Dorsolateral prefrontal cortex (tissue), 120 donors: ENCODE measurements at regions of chr1 and their contacts with region 1.

Region 1: DNA sequence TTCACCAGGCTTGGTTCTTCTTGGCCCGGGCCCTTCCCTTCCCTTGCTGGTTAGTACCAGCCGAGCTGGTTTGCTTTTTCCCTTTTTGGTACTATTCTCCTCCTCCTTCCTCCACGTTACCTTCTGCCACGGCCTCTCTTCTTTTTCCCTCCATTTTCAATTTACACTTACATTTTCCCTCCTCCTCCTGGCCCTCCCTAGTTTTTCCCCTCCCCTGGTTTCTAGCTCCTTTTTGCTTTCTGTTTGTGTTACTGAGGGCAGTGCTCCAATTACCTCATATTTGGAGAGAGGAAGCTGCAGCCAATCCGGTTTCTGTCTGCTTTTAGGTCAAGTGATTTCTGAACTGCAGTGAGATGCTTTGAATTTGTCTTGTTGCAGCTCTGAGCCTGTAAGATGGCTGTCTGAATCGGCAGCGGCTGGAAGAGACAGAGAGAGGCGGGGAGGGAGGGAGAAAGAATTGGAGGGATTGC is 63.7 kb downstream of the MACF1 start:
- DNase-seq: peak in 8 of 10 donors; percentile 38 to 82 (median 61)
- H3K4me3 ChIP-seq: peak overlapping the region; percentile 32 to 74 (median 58)
- H3K27ac ChIP-seq: peak overlapping the region; percentile 53 to 97 (median 92)
- H3K27me3 ChIP-seq: no peaks in the 10 kb centered on the region
- CTCF ChIP-seq: peak in 2 of 56 donors; percentile 12 to 32

Region 2: GRCh38 chr1:39282537-39283216 is 14.5 kb after region 1 on chr1:
- intact Hi-C with region 1: no loop called
- DNase-seq: no peak
- H3K4me3 ChIP-seq: no peak overlapping the region
- H3K27ac ChIP-seq: peak overlapping the region in 10 of 59 donors; percentile 10 to 57 (median 18)
- H3K27me3 ChIP-seq: no peaks in the 10 kb centered on the region
- CTCF ChIP-seq: no peak

Region 3: GRCh38 chr1:39332291-39332690 is 64.1 kb after region 1 on chr1:
- intact Hi-C with region 1: loop called (anchors 5 to 10 kb)
- DNase-seq: peak in 2 of 10 donors; percentile 11 to 26
- H3K4me3 ChIP-seq: peak overlapping the region in 2 of 59 donors; percentile 0 to 8
- H3K27ac ChIP-seq: peak overlapping the region in 57 of 59 donors; percentile 8 to 89 (median 72)
- H3K27me3 ChIP-seq: no peaks in the 10 kb centered on the region
- CTCF ChIP-seq: peak in 2 of 56 donors; percentile 9 to 11

Region 4: GRCh38 chr1:39354572-39354971 is 86.4 kb after region 1 on chr1:
- intact Hi-C with region 1: loop called in 1 of 2 experiments (anchors 2 kb)
- DNase-seq: no peak
- H3K4me3 ChIP-seq: no peak overlapping the region
- H3K27ac ChIP-seq: peak overlapping the region in 13 of 59 donors; percentile 0 to 63 (median 23)
- H3K27me3 ChIP-seq: no peaks in the 10 kb centered on the region
- CTCF ChIP-seq: peak in 48 of 56 donors; percentile 16 to 69 (median 40)

Region 5: DNA sequence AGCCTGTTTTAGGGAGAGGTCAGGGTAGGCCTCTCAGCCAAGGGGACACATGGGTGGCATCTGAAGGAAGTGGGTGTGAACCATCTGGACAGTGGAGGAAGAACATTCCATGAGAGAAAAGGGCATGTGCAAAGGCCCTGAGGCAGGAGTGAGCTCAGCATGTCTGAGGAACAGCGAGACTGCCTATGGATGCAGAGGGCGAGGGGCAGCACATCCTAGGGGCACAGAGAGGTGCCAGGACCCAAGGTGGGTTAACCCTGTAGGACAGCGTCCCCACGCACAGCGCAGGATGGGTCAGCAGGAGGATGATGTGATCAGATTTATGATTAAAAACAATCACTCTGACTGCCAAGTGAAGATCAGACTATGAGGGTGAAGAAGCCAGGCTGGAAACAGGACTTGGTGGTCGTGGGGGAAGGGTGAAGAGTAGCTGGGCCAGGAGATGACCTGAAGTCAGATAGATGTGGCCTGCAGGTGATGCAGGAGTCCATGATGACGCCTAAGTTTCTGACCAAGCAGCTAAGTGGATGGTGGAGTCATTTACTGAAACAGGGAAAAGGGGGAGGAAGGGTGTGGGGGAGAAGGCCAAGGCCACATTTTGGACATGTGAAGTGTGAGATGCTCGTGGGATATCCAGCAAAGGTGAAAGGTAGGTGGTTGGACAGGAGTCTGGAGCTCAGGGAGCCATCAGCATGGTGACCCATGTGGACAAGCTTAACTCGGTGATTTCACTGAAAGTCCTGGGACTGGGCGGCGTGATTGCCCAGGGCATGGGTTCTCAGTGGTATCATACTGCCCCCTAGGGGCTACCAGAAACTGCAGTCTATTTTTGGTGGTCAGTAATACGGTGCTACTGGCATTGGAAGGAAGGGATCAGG is 270.7 kb after region 1 on chr1:
- intact Hi-C with region 1: loop called in 1 of 2 experiments (anchors 5 kb)
- DNase-seq: peak; percentile 55 to 82 (median 76)
- H3K4me3 ChIP-seq: no peak overlapping the region
- H3K27ac ChIP-seq: peak overlapping the region in 25 of 59 donors; percentile 1 to 94 (median 87)
- H3K27me3 ChIP-seq: no peaks in the 10 kb centered on the region
- CTCF ChIP-seq: peak; percentile 83 to 99 (median 94)